ENCODE measurements at regions of chr7 and their contacts with region 1.

Region 1: GRCh38 chr7:86558680-86559501 is 84.8 kb upstream of the GRM3 start:
- ATAC-seq: peak in 6 of 8 experiments; percentile 25 to 97 (median 75)
- H3K4me3 ChIP-seq: no peak overlapping the region
- H3K27ac ChIP-seq: no peak overlapping the region
- H3K4me1 ChIP-seq: peaks cover 0 to 12% of the 10 kb centered on the region in 2 donors

Region 2: DNA sequence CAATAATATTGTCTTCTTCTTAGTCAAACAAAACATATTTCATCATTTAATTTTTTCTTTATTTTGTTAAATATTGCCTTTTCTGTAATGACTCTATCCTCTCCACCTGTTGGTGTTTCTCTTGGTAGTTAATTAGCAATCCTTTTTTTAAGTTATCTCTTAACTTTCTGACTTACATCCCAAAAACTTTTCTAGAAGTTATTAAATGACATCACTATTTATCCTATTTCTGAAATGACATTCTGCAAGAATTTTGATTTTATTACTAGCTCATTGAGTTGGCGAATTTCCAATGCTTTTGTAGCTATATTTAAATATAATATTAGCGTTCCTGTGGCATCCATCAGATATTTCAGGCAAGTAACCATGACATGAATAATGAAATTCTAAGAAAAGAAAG is 211.6 kb before region 1 on chr7:
- in situ Hi-C with region 1: no loop called
- ATAC-seq: no peak
- H3K4me3 ChIP-seq: no peak overlapping the region
- H3K27ac ChIP-seq: no peak overlapping the region
- H3K4me1 ChIP-seq: no peaks in the 10 kb centered on the region

Region 3: GRCh38 chr7:86814661-86815379 is 255.9 kb after region 1 on chr7:
- in situ Hi-C with region 1: loop called in 1 of 9 experiments (anchors 25 kb)
- ATAC-seq: peak in 3 of 8 experiments; percentile 27 to 49 (median 29)
- H3K4me3 ChIP-seq: no peak overlapping the region
- H3K27ac ChIP-seq: no peak overlapping the region
- H3K4me1 ChIP-seq: peaks cover 0 to 5% of the 10 kb centered on the region in 2 donors

Measured in motor neuron (in vitro differentiated cells).